Heart right ventricle (tissue), 16 donors: ENCODE measurements at regions of chr19 and their contacts with region 1.

Region 1: GRCh38 chr19:16111160-16111908 is at the start of gene RAB8A:
- DNase-seq: peak; percentile 99
- ATAC-seq: peak; percentile 97 to 99 (median 98)
- H3K4me3 ChIP-seq: peak within 1 kb of the TSS; percentile 64 to 96 (median 83)
- H3K27ac ChIP-seq: peak within 1 kb of the TSS; percentile 68 to 98 (median 92)
- H3K4me1 ChIP-seq: peaks cover 10 to 50% (median 28%) of the 10 kb centered on the region in 9 donors
- H3K27me3 ChIP-seq: no peaks in the 10 kb centered on the region
- CTCF ChIP-seq: peak in 8 of 9 donors; percentile 93 to 99 (median 98)
- total RNA-seq, gene RAB8A: 16.4 to 47.4 (median 21.0) TPM

Region 2: GRCh38 chr19:15971222-15971780 is 140.0 kb before region 1 on chr19:
- intact Hi-C with region 1: no loop called
- DNase-seq: no peak
- ATAC-seq: no peak
- H3K4me3 ChIP-seq: no peak overlapping the region
- H3K27ac ChIP-seq: no peak overlapping the region
- H3K4me1 ChIP-seq: no peaks in the 10 kb centered on the region
- H3K27me3 ChIP-seq: peaks cover 0 to 42% (median 0%) of the 10 kb centered on the region in 7 donors
- CTCF ChIP-seq: no peak

Region 3: GRCh38 chr19:16035601-16036297 is 75.6 kb before region 1 on chr19:
- intact Hi-C with region 1: loop called in 8 of 10 experiments (anchors 2 to 5 kb)
- DNase-seq: no peak
- ATAC-seq: no peak
- H3K4me3 ChIP-seq: no peak overlapping the region
- H3K27ac ChIP-seq: no peak overlapping the region
- H3K4me1 ChIP-seq: peaks cover 0 to 5% (median 2%) of the 10 kb centered on the region in 9 donors
- H3K27me3 ChIP-seq: peaks cover 0 to 6% (median 0%) of the 10 kb centered on the region in 7 donors
- CTCF ChIP-seq: no peak

Region 4: GRCh38 chr19:16062789-16063188 is 48.5 kb before region 1 on chr19:
- intact Hi-C with region 1: loop called in 3 of 10 experiments (anchors 5 to 10 kb)
- DNase-seq: peak; percentile 55 to 60
- ATAC-seq: peak in 4 of 8 donors; percentile 14 to 30 (median 22)
- H3K4me3 ChIP-seq: no peak overlapping the region
- H3K27ac ChIP-seq: peak overlapping the region in 1 of 10 donors; percentile 58
- H3K4me1 ChIP-seq: peaks cover 0 to 25% (median 8%) of the 10 kb centered on the region in 9 donors
- H3K27me3 ChIP-seq: peaks cover 0 to 6% (median 0%) of the 10 kb centered on the region in 7 donors
- CTCF ChIP-seq: peak; percentile 70 to 90 (median 79)

Region 5: GRCh38 chr19:16076154-16076957 is 35.0 kb before region 1 on chr19 and contains the start of gene TPM4:
- intact Hi-C with region 1: loop called in 4 of 10 experiments (anchors 2 to 5 kb)
- DNase-seq: peak; percentile 93 to 94
- ATAC-seq: peak; percentile 84 to 92 (median 89)
- H3K4me3 ChIP-seq: peak within 1 kb of the TSS; percentile 73 to 100 (median 95)
- H3K27ac ChIP-seq: peak within 1 kb of the TSS; percentile 99 to 100 (median 100)
- H3K4me1 ChIP-seq: peaks cover 0 to 74% (median 45%) of the 10 kb centered on the region in 9 donors
- H3K27me3 ChIP-seq: peaks cover 0 to 4% (median 0%) of the 10 kb centered on the region in 7 donors
- CTCF ChIP-seq: no peak
- total RNA-seq, gene TPM4: 52.0 to 231 (median 72.5) TPM

Region 6: DNA sequence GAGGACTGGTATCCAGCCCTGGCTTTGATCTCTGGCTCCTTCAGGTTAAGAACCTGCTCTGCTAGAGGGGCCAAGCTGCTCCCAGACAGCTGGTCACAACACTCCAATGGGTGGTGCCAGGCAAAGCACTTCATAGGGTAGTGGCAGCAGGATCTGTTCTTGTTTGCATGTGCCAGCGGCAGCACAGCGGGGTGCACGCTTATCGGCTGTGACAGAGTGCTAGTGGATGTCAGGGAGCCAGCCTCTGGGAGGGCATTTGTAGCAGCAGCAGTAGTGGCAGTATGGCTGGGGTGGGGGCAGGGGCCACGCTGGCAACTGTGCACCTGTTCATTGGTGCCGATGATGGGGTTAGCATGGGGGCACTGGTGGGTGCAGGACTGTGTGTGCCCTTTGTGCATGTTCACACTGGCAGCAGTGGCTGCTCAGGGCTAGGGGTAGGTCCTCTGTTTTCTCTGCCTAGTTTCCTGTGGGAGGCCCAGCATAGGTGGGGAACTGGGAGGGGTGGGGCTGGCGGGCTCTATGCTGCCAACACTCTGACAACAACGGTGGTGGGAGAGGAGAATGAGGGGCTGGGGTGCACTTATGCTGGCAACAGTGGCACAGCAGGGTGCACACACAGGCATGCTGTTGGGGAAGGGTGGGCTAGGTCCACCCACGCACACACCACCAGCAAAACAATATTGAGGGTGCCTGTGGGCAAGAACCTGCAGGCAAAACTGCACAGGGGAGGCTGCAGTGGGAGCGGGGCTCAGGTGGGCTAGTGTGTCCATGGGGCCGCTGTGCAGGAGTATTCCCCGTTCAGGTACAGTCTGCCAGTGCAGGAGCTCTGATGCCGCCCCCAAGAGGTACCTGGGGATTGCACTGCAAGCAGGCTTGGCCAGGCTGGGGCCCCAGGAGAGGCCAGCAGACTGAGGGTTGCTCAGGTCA is 105.7 kb after region 1 on chr19:
- intact Hi-C with region 1: no loop called
- DNase-seq: no peak
- ATAC-seq: peak in 6 of 8 donors; percentile 13 to 74 (median 32)
- H3K4me3 ChIP-seq: no peak overlapping the region
- H3K27ac ChIP-seq: no peak overlapping the region
- H3K4me1 ChIP-seq: peaks cover 0 to 10% (median 0%) of the 10 kb centered on the region in 9 donors
- H3K27me3 ChIP-seq: no peaks in the 10 kb centered on the region
- CTCF ChIP-seq: no peak